T-cell (primary cell): ENCODE measurements at regions of chr16 and their contacts with region 1.

Region 1: DNA sequence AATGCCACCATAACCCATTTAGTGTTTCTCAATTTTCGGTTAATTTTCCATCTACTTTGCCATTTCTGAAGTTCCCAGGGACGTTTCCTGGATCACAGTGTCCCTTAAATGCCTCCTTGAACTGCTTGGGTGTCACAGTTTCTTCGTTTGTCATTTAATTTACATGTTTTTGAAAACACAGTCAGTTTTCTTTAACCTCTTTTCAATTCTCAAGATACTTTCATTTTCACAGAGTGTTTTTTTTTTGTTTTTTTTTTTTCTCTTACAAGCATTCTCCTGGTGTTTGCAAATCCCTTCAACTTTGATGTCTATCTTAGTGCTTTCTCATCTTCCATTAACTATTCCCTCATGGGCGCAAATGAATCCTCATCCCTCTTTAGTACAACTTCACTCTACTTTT is 283.7 kb downstream of the GRIN2A start:
- DNase-seq: no peak
- ATAC-seq: no peak
- H3K4me3 ChIP-seq: no peak overlapping the region
- H3K4me3 Mint-ChIP-seq: no peak overlapping the region
- H3K27ac ChIP-seq: no peak overlapping the region
- H3K27ac Mint-ChIP-seq: no peak overlapping the region
- H3K4me1 ChIP-seq: no peaks in the 10 kb centered on the region
- H3K4me1 Mint-ChIP-seq: no peaks in the 10 kb centered on the region
- H3K27me3 ChIP-seq: no peaks in the 10 kb centered on the region
- H3K27me3 Mint-ChIP-seq: no peaks in the 10 kb centered on the region

Region 2: GRCh38 chr16:9695163-9695562 is 203.4 kb before region 1 on chr16:
- CTCF ChIA-PET with region 1: interaction called in 1 of 2 experiments, 17 read pairs
- POLR2A ChIA-PET with region 1: no interaction called
- DNase-seq: no peak
- ATAC-seq: no peak
- H3K4me3 ChIP-seq: no peak overlapping the region
- H3K4me3 Mint-ChIP-seq: no peak overlapping the region
- H3K27ac ChIP-seq: no peak overlapping the region
- H3K27ac Mint-ChIP-seq: no peak overlapping the region
- H3K4me1 ChIP-seq: no peaks in the 10 kb centered on the region
- H3K4me1 Mint-ChIP-seq: no peaks in the 10 kb centered on the region
- H3K27me3 ChIP-seq: no peaks in the 10 kb centered on the region
- H3K27me3 Mint-ChIP-seq: no peaks in the 10 kb centered on the region